Activated CD8-positive, alpha-beta T cell treated with anti-CD3 and anti-CD28 coated beads, Interleukin-2, amount 10 ng/mL, durations not matched to agents 7 days and 5 days (primary cell): ENCODE measurements at regions of chr5 and their contacts with region 1.

Region 1: DNA sequence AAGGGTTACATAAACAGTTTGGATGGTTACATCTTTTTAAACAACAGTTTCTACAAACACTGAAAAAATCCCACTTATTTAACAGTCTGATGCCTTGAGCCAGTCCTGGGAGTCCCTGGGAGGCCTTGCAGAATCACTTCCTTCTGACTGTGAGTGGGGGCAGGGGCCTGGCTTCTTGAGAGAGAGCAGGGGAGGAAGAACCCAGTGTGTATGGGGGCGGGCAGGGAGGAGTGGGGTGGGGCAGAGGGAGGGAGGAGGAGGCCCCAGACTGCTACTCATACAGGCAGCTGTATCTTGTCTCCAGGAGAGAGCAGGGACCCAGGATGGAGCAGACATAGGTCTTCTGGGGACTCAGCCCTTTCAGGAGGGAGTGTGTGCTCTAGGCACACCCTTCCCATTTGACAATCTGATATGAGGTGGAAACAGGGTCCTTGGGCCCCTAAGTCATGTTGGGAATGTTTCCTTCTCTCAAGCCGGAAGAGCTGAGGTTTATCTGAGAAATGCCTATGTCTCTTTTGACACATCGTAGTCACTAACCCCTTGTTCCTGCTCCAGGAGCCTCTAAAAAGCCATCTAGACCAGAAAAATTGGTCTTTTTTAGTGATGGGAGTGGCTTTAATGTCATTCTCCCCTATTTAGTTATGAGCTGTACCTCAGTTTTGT is 52.8 kb downstream of the IRF1 start:
- DNase-seq: peak; percentile 84
- ATAC-seq: peak; percentile 94
- H3K4me3 Mint-ChIP-seq: peak overlapping the region; percentile 66
- H3K27ac Mint-ChIP-seq: peak overlapping the region; percentile 83
- H3K4me1 Mint-ChIP-seq: peaks cover 90% of the 10 kb centered on the region
- H3K27me3 Mint-ChIP-seq: no peaks in the 10 kb centered on the region

Region 2: DNA sequence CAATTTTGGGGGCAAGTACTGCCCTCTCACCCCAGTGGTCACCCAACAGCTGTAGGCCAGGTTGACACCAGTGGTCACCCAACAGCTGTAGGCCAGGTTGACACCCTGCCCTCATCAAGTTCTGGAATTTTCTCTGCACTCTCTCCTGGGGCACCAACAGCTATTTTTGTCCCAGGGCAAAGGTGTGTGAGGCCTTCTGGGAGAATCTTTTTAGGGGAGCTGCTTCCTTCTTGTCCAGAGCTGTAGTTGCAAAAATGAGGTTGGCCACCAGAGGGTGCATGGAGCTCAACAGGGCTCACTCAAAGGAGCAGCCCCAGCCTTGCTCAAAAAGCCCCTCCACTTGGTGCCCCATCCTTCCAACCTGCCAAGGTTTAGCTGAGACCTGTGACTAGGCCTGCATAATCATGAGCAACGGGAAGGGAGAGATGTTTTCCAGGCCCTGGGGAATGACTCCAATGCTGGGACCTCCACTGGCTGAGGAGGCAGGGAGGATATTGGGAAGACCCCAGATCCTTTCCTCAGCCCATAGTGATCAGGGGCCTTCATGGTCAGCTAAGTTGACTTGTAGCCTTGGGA is 199.5 kb before region 1 on chr5:
- CTCF ChIA-PET with region 1: no interaction called
- POLR2A ChIA-PET with region 1: no interaction called
- DNase-seq: peak; percentile 87
- ATAC-seq: peak; percentile 90
- H3K4me3 Mint-ChIP-seq: no peak overlapping the region
- H3K27ac Mint-ChIP-seq: no peak overlapping the region
- H3K4me1 Mint-ChIP-seq: peaks cover 2% of the 10 kb centered on the region
- H3K27me3 Mint-ChIP-seq: peaks cover 2% of the 10 kb centered on the region

Region 3: GRCh38 chr5:132473019-132473531 is 35.3 kb after region 1 on chr5:
- CTCF ChIA-PET with region 1: interaction called, 11 read pairs
- POLR2A ChIA-PET with region 1: interaction called, 435 read pairs
- DNase-seq: peak; percentile 95
- ATAC-seq: peak; percentile 63
- H3K4me3 Mint-ChIP-seq: peak overlapping the region; percentile 42
- H3K27ac Mint-ChIP-seq: peak overlapping the region; percentile 94
- H3K4me1 Mint-ChIP-seq: peaks cover 92% of the 10 kb centered on the region
- H3K27me3 Mint-ChIP-seq: no peaks in the 10 kb centered on the region

Region 4: DNA sequence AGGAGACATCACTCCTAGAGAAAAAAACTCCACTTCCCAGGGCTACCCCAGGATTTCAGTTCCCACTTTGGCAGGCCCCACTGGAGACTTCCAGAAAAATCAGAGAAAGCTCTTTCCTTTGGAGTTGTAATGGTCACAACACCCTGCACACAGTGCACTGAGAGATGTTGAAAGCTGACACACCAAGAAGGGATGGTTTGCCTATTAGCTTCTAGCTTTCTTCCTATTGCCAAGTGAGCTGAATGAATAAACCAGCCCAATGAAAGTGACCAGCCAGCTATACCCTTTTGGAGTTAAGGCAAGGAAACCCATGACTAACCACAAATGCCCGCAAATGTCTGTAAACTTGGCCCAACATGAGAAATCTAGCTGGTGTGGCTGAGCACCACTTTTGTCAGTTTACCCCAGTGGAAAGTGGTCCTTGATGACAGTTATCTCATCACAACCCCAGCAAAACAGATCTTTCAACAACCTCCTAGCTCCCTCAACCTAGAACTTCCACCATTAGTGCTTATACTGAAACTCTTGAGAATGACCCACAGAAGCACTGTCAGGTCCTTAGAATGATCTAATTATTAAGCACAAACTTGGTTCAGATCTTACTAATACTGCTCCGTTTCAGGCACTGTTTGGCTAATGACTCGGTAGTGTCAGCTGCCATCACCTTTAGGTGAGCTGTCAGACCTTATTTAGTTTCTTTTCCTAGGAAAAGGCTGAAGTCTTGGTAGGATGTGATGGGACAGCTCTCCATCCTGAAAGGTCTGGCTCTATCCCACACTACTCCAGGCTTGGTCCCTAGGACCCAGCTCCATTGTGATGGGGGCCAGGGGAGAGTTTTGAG is 41.6 kb after region 1 on chr5:
- CTCF ChIA-PET with region 1: interaction called, 11 read pairs
- POLR2A ChIA-PET with region 1: interaction called, 435 read pairs
- DNase-seq: no peak
- ATAC-seq: no peak
- H3K4me3 Mint-ChIP-seq: no peak overlapping the region
- H3K27ac Mint-ChIP-seq: peak overlapping the region; percentile 80
- H3K4me1 Mint-ChIP-seq: peaks cover 83% of the 10 kb centered on the region
- H3K27me3 Mint-ChIP-seq: no peaks in the 10 kb centered on the region